Caco-2 (cell line): ENCODE measurements at regions of chrX and their contacts with region 1.

Region 1: GRCh38 chrX:64093761-64094160 is 111.7 kb downstream of the AMER1 start:
- DNase-seq: peak in 1 of 2 experiments; percentile 14
- H3K4me3 ChIP-seq: no peak overlapping the region
- H3K4me3 Mint-ChIP-seq: no peak overlapping the region
- H3K27ac Mint-ChIP-seq: no peak overlapping the region
- H3K4me1 ChIP-seq: no peaks in the 10 kb centered on the region
- H3K4me1 Mint-ChIP-seq: no peaks in the 10 kb centered on the region
- H3K27me3 ChIP-seq: no peaks in the 10 kb centered on the region
- H3K27me3 Mint-ChIP-seq: no peaks in the 10 kb centered on the region
- CTCF ChIP-seq: peak; percentile 29 to 45

Region 2: GRCh38 chrX:64152857-64153256 is 59.1 kb after region 1 on chrX:
- CTCF ChIA-PET with region 1: no interaction called
- POLR2A ChIA-PET with region 1: no interaction called
- intact Hi-C with region 1: no loop called
- DNase-seq: peak; percentile 1 to 36
- H3K4me3 ChIP-seq: no peak overlapping the region
- H3K4me3 Mint-ChIP-seq: no peak overlapping the region
- H3K27ac Mint-ChIP-seq: no peak overlapping the region
- H3K4me1 ChIP-seq: no peaks in the 10 kb centered on the region
- H3K4me1 Mint-ChIP-seq: no peaks in the 10 kb centered on the region
- H3K27me3 ChIP-seq: no peaks in the 10 kb centered on the region
- H3K27me3 Mint-ChIP-seq: no peaks in the 10 kb centered on the region
- CTCF ChIP-seq: no peak

Region 3: GRCh38 chrX:64229145-64229544 is 135.4 kb after region 1 on chrX:
- CTCF ChIA-PET with region 1: no interaction called
- POLR2A ChIA-PET with region 1: no interaction called
- intact Hi-C with region 1: loop called (anchors 5 kb)
- DNase-seq: peak; percentile 4 to 32
- H3K4me3 ChIP-seq: no peak overlapping the region
- H3K4me3 Mint-ChIP-seq: no peak overlapping the region
- H3K27ac Mint-ChIP-seq: no peak overlapping the region
- H3K4me1 ChIP-seq: no peaks in the 10 kb centered on the region
- H3K4me1 Mint-ChIP-seq: no peaks in the 10 kb centered on the region
- H3K27me3 ChIP-seq: no peaks in the 10 kb centered on the region
- H3K27me3 Mint-ChIP-seq: peaks cover 2% of the 10 kb centered on the region
- CTCF ChIP-seq: no peak